ENCODE measurements at regions of chr15 and their contacts with region 1.

Region 1: DNA sequence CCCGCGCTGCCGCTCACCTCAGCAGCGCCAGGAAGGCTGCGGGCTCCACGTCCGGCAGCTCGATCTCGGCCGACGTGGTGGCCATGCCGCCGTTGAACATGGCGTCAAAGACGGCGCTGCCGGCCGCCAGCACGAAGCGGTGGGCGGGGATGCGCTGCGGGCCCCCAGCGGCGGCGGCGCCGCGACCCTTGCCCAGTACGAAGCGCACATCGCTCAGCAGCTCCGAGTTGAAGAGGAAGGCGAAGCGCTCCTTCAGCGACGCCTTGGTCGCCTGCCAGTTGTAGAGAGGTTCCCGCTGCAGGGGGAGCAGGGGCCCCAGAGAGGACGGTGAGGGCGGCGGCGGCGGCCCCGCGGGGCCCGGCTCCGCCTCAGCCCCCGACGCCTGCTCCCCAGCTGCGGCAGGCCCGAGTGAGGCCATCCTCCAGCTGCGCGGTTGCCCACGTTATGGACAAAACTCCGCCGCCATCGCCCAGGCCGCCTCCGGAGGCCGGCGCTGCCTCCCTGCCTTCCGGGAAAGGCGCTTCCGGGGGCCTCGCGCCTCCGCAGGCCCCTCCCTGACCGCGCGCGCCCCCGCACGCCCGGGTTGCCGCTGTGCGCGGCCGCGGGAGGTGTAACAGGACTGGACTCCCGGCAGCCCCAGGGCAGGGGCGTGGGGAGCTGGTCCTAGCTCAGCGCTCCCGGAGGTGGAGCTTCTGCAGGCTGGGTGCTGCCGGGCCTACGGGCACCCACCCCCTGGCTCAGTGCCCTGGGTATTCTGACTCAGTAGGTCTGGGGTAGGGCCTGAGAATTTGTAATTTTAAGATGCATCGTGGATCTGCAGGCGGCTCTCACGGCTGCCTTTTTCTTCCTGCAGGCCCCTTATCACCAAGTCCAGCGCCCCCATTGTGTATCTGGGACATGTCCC is at the start of gene BTBD1:
- DNase-seq: peak; percentile 92
- H3K4me3 Mint-ChIP-seq: peak within 1 kb of the TSS; percentile 84
- H3K27ac Mint-ChIP-seq: peak within 1 kb of the TSS; percentile 83
- H3K4me1 Mint-ChIP-seq: peaks cover 22% of the 10 kb centered on the region
- H3K27me3 Mint-ChIP-seq: no peaks in the 10 kb centered on the region
- total RNA-seq, gene BTBD1: 45.2 to 46.1 TPM

Region 2: GRCh38 chr15:82540055-82540983 is 526.7 kb before region 1 on chr15 and contains the start of gene RPS17:
- CTCF ChIA-PET with region 1: no interaction called
- intact Hi-C with region 1: loop called (anchors 1 kb)
- DNase-seq: peak; percentile 96
- H3K4me3 Mint-ChIP-seq: peak within 1 kb of the TSS; percentile 85
- H3K27ac Mint-ChIP-seq: peak within 1 kb of the TSS; percentile 96
- H3K4me1 Mint-ChIP-seq: peaks cover 34% of the 10 kb centered on the region
- H3K27me3 Mint-ChIP-seq: no peaks in the 10 kb centered on the region
- total RNA-seq, gene RPS17: 3,025 to 3,069 TPM

Region 3: GRCh38 chr15:82663186-82663600 is 403.8 kb before region 1 on chr15:
- CTCF ChIA-PET with region 1: no interaction called
- intact Hi-C with region 1: no loop called
- DNase-seq: peak; percentile 69
- H3K4me3 Mint-ChIP-seq: no peak overlapping the region
- H3K27ac Mint-ChIP-seq: no peak overlapping the region
- H3K4me1 Mint-ChIP-seq: no peaks in the 10 kb centered on the region
- H3K27me3 Mint-ChIP-seq: peaks cover 6% of the 10 kb centered on the region

Region 4: DNA sequence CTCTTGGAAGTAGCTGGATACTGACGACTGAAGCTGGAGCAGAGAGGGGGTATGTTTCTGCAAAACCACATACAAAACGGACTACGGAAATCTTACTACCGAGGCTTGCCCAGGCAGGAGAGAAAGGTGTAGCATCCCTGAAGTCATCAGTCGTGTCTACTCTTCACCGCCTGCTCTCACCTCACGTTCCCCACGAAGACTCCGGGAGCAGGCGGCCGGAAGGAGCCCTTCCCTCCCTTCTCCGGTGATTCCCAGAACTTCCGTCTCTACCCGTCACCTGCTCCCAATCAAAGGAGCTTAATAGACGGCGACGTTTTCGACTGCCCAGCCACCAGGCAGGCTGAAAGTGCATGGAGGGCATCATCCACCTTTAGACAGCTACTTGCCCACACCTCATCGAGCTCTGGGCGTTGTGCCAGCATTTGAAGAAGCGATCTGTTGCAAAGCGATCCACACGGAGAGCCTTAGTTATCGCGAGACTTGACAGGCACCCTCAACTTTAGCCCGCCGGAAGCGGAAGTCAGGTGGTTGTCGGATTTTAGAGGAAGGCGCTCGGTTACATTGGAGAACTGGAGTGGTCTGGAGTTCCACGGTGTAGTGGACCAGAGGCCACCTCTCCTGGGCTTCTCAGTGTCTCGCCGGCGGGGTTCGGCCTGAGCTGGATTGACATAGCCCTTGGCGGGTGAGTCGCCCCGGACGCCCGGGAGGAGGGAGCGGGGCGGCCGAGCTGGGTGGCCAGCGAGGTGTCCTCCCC is 81.1 kb before region 1 on chr15 and contains the start of gene RAMAC:
- CTCF ChIA-PET with region 1: no interaction called
- intact Hi-C with region 1: loop called (anchors 1 kb)
- DNase-seq: peak; percentile 96
- H3K4me3 Mint-ChIP-seq: peak within 1 kb of the TSS; percentile 96
- H3K27ac Mint-ChIP-seq: peak within 1 kb of the TSS; percentile 94
- H3K4me1 Mint-ChIP-seq: peaks cover 25% of the 10 kb centered on the region
- H3K27me3 Mint-ChIP-seq: no peaks in the 10 kb centered on the region
- total RNA-seq, gene RAMAC: 15.3 to 15.6 TPM

Region 5: DNA sequence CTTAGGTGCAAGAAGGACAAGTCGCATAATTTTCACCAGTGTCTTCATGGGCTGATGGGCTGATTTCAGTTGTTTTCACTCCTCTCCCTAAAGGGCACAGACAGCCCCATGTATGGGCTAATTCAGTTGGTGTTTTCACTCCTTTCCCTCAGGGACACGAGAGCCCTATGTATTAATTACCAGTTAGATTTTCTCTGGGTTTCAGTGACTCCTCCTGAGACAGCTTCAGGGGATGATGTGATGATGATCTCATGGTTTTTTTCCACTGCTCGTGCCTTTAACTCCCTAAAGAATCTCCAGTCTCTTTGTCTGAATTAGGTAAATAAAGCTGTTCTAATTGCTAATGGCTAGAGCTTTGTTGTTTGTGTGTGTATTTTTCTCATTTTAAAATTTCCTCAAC is 71.0 kb before region 1 on chr15:
- CTCF ChIA-PET with region 1: no interaction called
- intact Hi-C with region 1: no loop called
- DNase-seq: no peak
- H3K4me3 Mint-ChIP-seq: no peak overlapping the region
- H3K27ac Mint-ChIP-seq: no peak overlapping the region
- H3K4me1 Mint-ChIP-seq: peaks cover 6% of the 10 kb centered on the region
- H3K27me3 Mint-ChIP-seq: no peaks in the 10 kb centered on the region

Region 6: GRCh38 chr15:83108266-83109226 is 41.6 kb after region 1 on chr15:
- CTCF ChIA-PET with region 1: no interaction called
- intact Hi-C with region 1: loop called (anchors 2 kb)
- DNase-seq: peak; percentile 39
- H3K4me3 Mint-ChIP-seq: peak overlapping the region; percentile 81
- H3K27ac Mint-ChIP-seq: no peak overlapping the region
- H3K4me1 Mint-ChIP-seq: peaks cover 16% of the 10 kb centered on the region
- H3K27me3 Mint-ChIP-seq: peaks cover 58% of the 10 kb centered on the region

Region 7: GRCh38 chr15:83164111-83164770 is 97.3 kb after region 1 on chr15:
- CTCF ChIA-PET with region 1: no interaction called
- intact Hi-C with region 1: loop called (anchors 5 kb)
- DNase-seq: no peak
- H3K4me3 Mint-ChIP-seq: no peak overlapping the region
- H3K27ac Mint-ChIP-seq: no peak overlapping the region
- H3K4me1 Mint-ChIP-seq: peaks cover 14% of the 10 kb centered on the region
- H3K27me3 Mint-ChIP-seq: peaks cover 29% of the 10 kb centered on the region

Region 8: DNA sequence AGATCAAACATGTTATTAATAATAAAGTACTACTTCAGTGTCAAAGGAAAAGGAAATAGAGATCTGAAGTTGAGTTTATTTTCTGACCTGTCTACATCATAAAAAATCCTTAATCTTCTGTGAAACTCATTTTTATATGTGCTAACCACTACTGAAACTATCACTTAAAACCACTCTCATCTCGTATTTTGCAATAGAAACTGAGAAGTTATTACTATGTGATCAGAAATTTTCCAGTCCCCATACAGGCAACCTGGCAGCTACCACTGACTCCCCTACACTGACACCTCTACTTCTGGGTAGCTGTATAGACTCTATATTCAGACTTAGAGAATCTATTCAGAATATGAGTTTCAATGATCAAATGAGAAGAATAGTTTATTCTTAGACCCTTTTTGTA is 132.3 kb after region 1 on chr15:
- CTCF ChIA-PET with region 1: no interaction called
- intact Hi-C with region 1: loop called (anchors 1 kb)
- DNase-seq: peak; percentile 34
- H3K4me3 Mint-ChIP-seq: no peak overlapping the region
- H3K27ac Mint-ChIP-seq: no peak overlapping the region
- H3K4me1 Mint-ChIP-seq: peaks cover 19% of the 10 kb centered on the region
- H3K27me3 Mint-ChIP-seq: peaks cover 28% of the 10 kb centered on the region

Measured in activated naive CD4-positive, alpha-beta T cell treated with anti-CD3 and anti-CD28 coated beads for 36 hours (primary cell).